Aorta (tissue), 5 donors: ENCODE measurements at regions of chr15 and their contacts with region 1.

Region 1: DNA sequence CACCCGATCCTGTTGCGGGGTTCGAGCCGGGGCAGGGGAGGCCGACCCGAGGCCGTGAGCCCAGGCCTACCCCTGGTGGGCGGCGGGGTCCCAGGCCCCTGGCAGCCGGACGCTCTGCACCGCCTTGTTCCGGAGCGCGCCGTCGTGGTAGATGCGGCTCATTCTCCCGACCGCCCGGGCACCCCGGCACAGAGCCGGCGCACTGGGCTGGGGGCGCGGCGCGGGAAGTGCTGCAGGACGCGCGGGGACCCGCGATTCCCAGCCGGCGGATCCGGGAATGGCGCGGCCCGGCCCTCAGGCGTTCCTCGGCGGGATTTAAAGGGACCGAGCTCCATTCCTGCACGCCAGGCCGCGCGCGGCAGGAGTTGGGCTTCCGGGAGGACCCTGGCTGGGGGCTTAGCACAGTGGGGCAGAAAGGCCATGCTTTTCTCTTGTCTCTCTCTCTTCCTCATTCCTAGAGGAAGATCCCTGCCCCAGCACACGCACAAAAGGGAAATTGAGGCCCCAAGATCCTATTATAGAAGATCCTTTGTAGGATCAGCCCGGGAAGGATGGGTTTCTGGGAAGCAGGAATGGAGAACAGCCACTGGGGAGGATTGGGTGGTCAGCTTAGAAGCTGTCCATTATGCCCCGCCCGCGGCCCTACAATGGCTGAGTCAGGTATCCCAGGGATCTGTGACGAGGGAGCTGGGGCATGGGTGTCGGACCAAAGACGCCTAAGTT is at the start of gene ARPIN:
- DNase-seq: peak; percentile 73 to 85
- ATAC-seq: peak; percentile 85
- H3K4me3 ChIP-seq: peak within 1 kb of the TSS; percentile 31 to 84
- H3K27ac ChIP-seq: peak within 1 kb of the TSS in 1 of 2 donors; percentile 11
- H3K4me1 ChIP-seq: no peaks in the 10 kb centered on the region
- H3K27me3 ChIP-seq: no peaks in the 10 kb centered on the region
- total RNA-seq, gene ARPIN: 18.4 to 35.4 TPM

Region 2: GRCh38 chr15:89964232-89964954 is 51.6 kb after region 1 on chr15:
- intact Hi-C with region 1: no loop called
- DNase-seq: no peak
- ATAC-seq: no peak
- H3K4me3 ChIP-seq: no peak overlapping the region
- H3K27ac ChIP-seq: no peak overlapping the region
- H3K4me1 ChIP-seq: no peaks in the 10 kb centered on the region
- H3K27me3 ChIP-seq: no peaks in the 10 kb centered on the region

Region 3: DNA sequence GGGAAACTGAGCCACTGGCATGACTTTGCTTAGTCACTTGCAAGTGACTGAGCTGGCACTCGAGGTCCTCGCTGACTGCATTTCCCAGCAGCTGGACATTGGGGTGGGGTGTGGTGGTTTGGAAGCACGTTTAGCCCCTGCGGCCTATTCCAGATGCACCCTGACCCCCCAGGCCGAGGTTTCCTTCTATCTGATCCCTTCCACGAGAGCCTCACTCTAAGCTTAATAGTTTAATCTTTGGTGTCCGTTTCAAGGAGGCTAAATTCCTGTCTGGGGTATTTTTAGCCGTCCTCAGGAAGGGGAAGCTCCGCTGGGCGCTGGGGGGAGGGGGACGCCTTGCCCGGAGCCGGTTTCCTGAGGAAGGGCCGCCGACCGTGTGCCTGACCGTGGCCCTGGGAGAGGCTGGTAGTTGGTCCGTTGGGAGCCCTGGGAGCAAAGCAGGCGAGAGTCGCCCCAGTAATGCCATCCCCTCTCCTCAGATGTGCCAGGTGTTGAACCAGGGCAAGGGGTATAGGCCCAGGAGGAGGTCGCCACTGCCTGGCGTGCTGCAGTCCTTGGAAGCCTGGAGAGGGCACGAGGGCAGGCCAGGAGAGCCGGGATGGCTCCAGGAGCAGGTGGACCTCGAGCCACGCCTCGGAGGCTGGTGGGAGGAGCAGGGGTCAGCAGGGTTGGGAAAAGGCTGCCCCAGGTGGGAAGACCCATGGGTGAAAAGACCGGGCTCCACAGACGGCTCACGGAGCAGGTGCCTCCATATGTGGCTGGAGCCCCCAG is 152.3 kb after region 1 on chr15:
- intact Hi-C with region 1: loop called in 1 of 2 experiments (anchors 5 kb)
- DNase-seq: peak in 1 of 2 donors; percentile 89
- ATAC-seq: peak; percentile 51
- H3K4me3 ChIP-seq: no peak overlapping the region
- H3K27ac ChIP-seq: peak overlapping the region in 1 of 2 donors; percentile 55
- H3K4me1 ChIP-seq: no peaks in the 10 kb centered on the region
- H3K27me3 ChIP-seq: no peaks in the 10 kb centered on the region

Region 4: DNA sequence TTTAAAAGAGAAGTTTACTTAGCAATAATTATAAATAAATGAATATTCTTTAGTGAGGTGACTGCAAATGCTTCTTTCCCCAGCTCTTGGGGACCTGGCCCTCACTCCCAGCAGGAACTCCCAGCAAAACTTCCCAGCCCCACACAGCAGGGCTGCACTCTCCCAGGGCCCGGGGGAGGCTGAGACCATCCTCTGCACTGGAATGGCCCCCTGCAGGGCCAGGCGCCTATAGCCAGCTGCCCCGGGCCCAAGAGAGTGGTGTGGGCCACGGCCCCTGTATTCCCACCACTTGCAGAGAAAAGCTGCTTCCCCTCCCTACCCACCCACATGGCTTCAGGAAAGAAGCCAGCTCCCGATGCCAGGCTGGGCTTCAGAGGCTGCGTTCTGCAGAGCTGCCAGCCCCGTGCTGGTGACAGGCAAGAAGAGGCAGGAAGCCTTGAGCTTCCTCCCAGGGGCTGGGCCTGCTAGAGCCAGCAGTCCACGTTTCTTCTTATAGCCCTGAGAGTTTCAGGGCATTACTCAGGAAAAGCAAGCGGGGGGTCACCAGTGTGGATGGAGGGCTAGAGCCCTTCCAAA is 169.4 kb after region 1 on chr15:
- intact Hi-C with region 1: loop called in 1 of 2 experiments (anchors 5 kb)
- DNase-seq: no peak
- ATAC-seq: no peak
- H3K4me3 ChIP-seq: no peak overlapping the region
- H3K27ac ChIP-seq: no peak overlapping the region
- H3K4me1 ChIP-seq: no peaks in the 10 kb centered on the region
- H3K27me3 ChIP-seq: no peaks in the 10 kb centered on the region